Naive thymus-derived CD4-positive, alpha-beta T cell (primary cell): ENCODE measurements at regions of chr17 and their contacts with region 1.

Region 1: GRCh38 chr17:32298298-32298697 is 32.7 kb downstream of the RHBDL3 start:
- DNase-seq: no peak
- ATAC-seq: no peak
- H3K4me3 ChIP-seq: no peak overlapping the region
- H3K4me3 Mint-ChIP-seq: no peak overlapping the region
- H3K27ac ChIP-seq: no peak overlapping the region
- H3K27ac Mint-ChIP-seq: no peak overlapping the region
- H3K4me1 ChIP-seq: no peaks in the 10 kb centered on the region
- H3K4me1 Mint-ChIP-seq: peaks cover 0 to 2% (median 0%) of the 10 kb centered on the region in 7 donors
- H3K27me3 ChIP-seq: no peaks in the 10 kb centered on the region
- H3K27me3 Mint-ChIP-seq: peaks cover 0 to 4% (median 0%) of the 10 kb centered on the region in 5 donors

Region 2: GRCh38 chr17:32311028-32311536 is 12.8 kb after region 1 on chr17:
- CTCF ChIA-PET with region 1: no interaction called
- POLR2A ChIA-PET with region 1: no interaction called
- intact Hi-C with region 1: loop called in 1 of 2 experiments (anchors 1 kb)
- DNase-seq: no peak
- ATAC-seq: no peak
- H3K4me3 ChIP-seq: no peak overlapping the region
- H3K4me3 Mint-ChIP-seq: no peak overlapping the region
- H3K27ac ChIP-seq: no peak overlapping the region
- H3K27ac Mint-ChIP-seq: peak overlapping the region in 1 of 9 donors; percentile 82
- H3K4me1 ChIP-seq: no peaks in the 10 kb centered on the region
- H3K4me1 Mint-ChIP-seq: peaks cover 0 to 3% (median 0%) of the 10 kb centered on the region in 7 donors
- H3K27me3 ChIP-seq: no peaks in the 10 kb centered on the region
- H3K27me3 Mint-ChIP-seq: peaks cover 4 to 51% (median 5%) of the 10 kb centered on the region in 5 donors